Ovary (tissue), 10 donors: ENCODE measurements at regions of chr19 and their contacts with region 1.

Region 1: GRCh38 chr19:40128991-40129390 is 38.2 kb upstream of the ZNF780A start:
- DNase-seq: no peak
- H3K4me3 ChIP-seq: no peak overlapping the region
- H3K27ac ChIP-seq: no peak overlapping the region
- H3K4me1 ChIP-seq: no peaks in the 10 kb centered on the region
- H3K27me3 ChIP-seq: no peaks in the 10 kb centered on the region
- CTCF ChIP-seq: no peak
- EP300 ChIP-seq: no peak
- POLR2A ChIP-seq: no peak

Region 2: GRCh38 chr19:41288673-41289505 is 1159.9 kb after region 1 on chr19:
- intact Hi-C with region 1: loop called in 1 of 4 experiments (anchors 5 kb)
- DNase-seq: no peak
- H3K4me3 ChIP-seq: no peak overlapping the region
- H3K27ac ChIP-seq: no peak overlapping the region
- H3K4me1 ChIP-seq: no peaks in the 10 kb centered on the region
- H3K27me3 ChIP-seq: no peaks in the 10 kb centered on the region
- CTCF ChIP-seq: no peak
- EP300 ChIP-seq: no peak
- POLR2A ChIP-seq: no peak